Esophagus muscularis mucosa (tissue), 4 donors: ENCODE measurements at regions of chr12 and their contacts with region 1.

Region 1: DNA sequence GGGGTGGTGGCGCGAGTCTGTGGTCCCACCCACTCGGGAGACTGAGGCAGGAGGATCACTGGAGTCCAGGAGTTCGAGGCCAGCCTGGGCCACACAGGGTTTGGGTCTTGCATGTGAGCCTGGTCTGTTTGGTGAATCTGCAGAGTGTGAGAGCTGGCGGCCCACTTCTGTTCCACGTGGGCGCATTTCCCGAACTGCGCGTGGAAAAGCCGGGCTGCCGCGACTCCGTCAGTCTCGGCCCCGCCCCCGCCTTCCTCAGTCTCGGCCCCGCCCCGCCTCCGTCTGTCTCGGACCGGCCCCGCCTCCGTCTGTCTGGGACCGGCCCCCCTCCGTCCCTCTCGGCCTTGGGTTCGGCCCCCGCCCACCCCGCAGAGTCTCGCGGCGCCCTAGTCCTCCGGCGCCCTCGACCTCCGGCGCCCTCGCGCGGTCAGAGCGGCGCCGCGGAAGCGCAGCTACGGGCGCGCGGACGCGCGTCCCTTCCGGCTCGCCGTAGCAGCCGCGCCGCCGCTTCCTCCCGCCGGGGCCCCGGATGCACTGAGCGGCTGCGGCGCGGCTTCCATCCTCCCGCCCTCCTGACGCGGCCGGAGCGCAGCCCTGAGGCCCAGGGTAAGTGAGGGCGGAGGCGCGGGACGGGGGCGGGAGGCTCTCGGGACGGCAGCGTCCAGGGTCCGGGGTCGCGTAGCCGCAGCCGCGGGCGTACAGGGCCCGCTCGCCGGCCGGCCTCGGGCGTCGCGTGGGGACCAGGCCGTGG is at the start of gene EP400:
- DNase-seq: peak; percentile 99
- H3K4me3 ChIP-seq: peak within 1 kb of the TSS; percentile 71 to 100 (median 98)
- H3K27ac ChIP-seq: peak within 1 kb of the TSS; percentile 83 to 91 (median 89)
- H3K4me1 ChIP-seq: peaks cover 23 to 61% (median 41%) of the 10 kb centered on the region in 4 donors
- H3K27me3 ChIP-seq: no peaks in the 10 kb centered on the region
- CTCF ChIP-seq: peak; percentile 57 to 81 (median 73)
- EP300 ChIP-seq: no peak
- POLR2A ChIP-seq: no peak
- total RNA-seq, gene EP400: 16.9 to 31.1 (median 22.4) TPM

Region 2: DNA sequence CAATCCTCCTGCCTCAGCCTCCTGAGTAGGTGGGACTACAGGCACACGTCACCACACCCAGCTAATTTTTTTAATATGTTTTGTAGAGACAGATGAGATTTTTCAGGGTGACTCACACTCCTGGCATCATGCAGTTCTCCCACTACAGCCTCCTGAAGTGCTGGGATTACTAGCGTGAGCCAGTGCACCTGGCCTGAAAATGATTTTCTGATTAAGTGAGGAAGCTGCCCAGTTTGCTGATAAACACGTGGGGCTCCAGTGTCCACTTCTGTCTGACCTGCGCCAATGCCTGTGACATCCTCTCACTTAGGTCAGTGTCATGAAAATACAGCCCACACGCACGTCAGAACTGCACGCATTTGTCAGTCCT is 275.7 kb before region 1 on chr12:
- intact Hi-C with region 1: no loop called
- DNase-seq: no peak
- H3K4me3 ChIP-seq: no peak overlapping the region
- H3K27ac ChIP-seq: no peak overlapping the region
- H3K4me1 ChIP-seq: no peaks in the 10 kb centered on the region
- H3K27me3 ChIP-seq: peaks cover 0 to 60% (median 2%) of the 10 kb centered on the region in 4 donors
- CTCF ChIP-seq: no peak
- EP300 ChIP-seq: no peak
- POLR2A ChIP-seq: no peak

Region 3: DNA sequence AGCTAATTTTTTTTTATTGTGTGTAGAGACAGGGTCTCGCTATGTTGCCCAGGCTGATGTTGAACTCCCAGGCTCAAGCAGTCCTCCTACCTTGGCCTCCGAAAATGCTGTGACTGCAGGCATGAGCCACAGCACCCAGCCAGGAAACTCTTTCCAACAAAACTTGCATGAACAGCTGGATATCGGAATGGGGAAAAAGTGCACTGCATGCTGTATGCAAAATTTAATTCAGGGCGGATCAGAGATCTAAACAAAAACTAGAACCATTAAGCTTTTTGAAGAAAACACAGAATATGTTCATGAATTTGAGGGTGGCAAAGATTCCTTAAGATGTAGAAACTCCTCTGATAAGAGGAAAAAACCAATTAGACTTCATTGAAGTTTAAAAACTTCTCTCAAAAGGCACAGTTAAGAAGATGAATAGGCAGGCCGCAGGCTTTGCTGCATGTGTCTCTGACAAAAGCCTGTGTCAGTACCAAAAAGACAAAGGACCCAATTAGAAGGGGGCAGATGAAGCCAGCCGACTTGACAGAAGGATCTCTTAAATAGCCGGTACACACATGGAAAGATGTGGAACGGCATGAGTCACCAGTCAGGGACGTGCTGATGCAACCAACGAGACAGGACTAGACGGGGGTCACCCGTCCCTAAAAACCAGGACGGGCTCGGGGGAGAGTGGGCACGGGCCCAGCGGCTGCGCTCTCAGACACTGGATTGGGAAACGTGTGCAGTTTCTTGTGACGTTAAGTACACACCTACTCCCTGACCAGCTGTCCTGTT is 156.2 kb before region 1 on chr12:
- intact Hi-C with region 1: no loop called
- DNase-seq: no peak
- H3K4me3 ChIP-seq: no peak overlapping the region
- H3K27ac ChIP-seq: no peak overlapping the region
- H3K4me1 ChIP-seq: no peaks in the 10 kb centered on the region
- H3K27me3 ChIP-seq: no peaks in the 10 kb centered on the region
- CTCF ChIP-seq: no peak
- EP300 ChIP-seq: no peak
- POLR2A ChIP-seq: no peak

Region 4: GRCh38 chr12:131845121-131845520 is 104.5 kb before region 1 on chr12:
- intact Hi-C with region 1: loop called (anchors 5 kb)
- DNase-seq: no peak
- H3K4me3 ChIP-seq: no peak overlapping the region
- H3K27ac ChIP-seq: no peak overlapping the region
- H3K4me1 ChIP-seq: no peaks in the 10 kb centered on the region
- H3K27me3 ChIP-seq: peaks cover 0 to 8% (median 0%) of the 10 kb centered on the region in 4 donors
- CTCF ChIP-seq: no peak
- EP300 ChIP-seq: no peak
- POLR2A ChIP-seq: no peak

Region 5: GRCh38 chr12:131896080-131896810 is 53.4 kb before region 1 on chr12:
- intact Hi-C with region 1: loop called (anchors 5 kb)
- DNase-seq: peak; percentile 96
- H3K4me3 ChIP-seq: peak overlapping the region; percentile 67 to 82 (median 69)
- H3K27ac ChIP-seq: peak overlapping the region; percentile 95 to 99 (median 98)
- H3K4me1 ChIP-seq: peaks cover 39 to 67% (median 60%) of the 10 kb centered on the region in 4 donors
- H3K27me3 ChIP-seq: no peaks in the 10 kb centered on the region
- CTCF ChIP-seq: no peak
- EP300 ChIP-seq: peak; percentile 57
- POLR2A ChIP-seq: peak; percentile 92

Region 6: DNA sequence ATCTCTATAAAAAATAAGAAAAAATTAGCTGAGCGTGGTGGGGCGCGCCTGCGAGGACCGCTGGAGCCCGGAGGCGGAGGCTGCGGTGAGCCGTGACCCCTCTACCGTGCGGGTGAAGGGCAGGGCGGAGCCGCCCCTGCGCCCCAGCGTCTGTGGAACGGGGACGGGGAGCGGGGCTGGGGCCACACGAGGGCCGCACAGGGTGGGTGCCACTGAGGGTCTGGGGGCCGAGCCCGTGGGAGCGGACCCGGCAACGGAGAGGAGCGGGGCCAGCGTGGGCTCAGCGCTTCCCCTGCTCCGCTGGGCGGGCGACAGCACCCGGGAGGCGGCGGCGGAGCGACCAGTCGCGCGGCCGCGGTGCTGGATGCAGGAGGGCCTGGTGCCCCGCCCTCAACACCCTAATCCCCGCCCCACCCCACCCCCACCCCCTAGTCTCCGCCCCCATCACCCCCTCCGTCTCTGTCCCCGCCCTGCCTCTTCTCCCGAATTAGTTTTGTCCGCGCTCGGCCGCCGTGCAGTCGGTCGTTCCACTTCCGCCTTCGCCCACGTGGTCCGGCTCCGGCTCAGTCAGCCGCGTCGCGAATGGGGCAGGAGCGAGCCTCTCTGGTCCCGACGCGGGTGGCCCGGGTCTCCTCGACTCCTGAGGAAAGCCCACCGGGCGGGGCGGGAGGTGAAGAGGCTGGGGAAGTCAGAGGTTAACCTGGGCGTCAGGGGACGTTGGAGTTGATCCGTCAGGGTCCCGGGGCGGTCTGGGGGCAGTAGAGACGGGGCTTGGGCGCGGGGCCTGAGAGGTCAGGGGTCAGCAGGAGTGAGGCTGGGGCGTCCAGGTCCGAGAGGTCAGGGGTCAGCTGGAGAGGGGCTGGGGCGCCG is 20.7 kb before region 1 on chr12 and contains the start of gene PUS1:
- intact Hi-C with region 1: loop called (anchors 2 kb)
- DNase-seq: peak; percentile 98
- H3K4me3 ChIP-seq: peak within 1 kb of the TSS; percentile 75 to 95 (median 82)
- H3K27ac ChIP-seq: peak within 1 kb of the TSS; percentile 90 to 96 (median 92)
- H3K4me1 ChIP-seq: peaks cover 16 to 43% (median 39%) of the 10 kb centered on the region in 4 donors
- H3K27me3 ChIP-seq: no peaks in the 10 kb centered on the region
- CTCF ChIP-seq: no peak
- EP300 ChIP-seq: no peak
- POLR2A ChIP-seq: peak; percentile 42
- total RNA-seq, gene PUS1: 14.7 to 23.3 (median 19.5) TPM